ENCODE measurements at regions of chr22 and their contacts with region 1.

Region 1: GRCh38 chr22:19970479-19971275 is 29.1 kb upstream of the TXNRD2 start:
- DNase-seq: peak; percentile 92

Region 2: DNA sequence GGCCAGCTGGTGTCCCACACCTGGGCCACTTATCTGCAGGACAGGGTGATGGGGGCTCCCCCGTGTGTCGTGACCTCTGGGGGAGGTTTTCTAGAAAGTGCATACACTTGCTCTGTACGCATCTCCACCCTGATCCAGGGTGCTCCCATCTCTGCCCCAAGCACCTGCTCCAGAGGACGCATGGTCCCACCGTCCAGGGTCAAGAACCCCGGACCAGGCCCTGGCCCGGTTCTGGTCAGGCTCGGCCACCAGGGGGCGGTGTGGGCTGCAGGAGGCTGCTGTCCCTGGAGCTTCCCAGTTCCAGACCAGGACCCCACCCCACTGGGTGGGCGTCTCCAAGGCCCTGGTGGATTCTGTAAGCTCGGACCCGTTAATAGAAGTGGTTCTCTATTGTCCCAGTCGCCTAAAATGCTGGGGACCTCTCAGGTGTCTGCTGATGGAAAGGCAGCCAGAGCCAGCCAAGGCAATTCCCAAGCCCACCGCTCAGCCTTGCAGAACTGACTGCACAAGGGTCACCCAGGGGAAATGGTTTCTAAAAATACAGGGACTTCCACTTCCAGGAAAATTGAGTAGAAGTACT is 291.1 kb before region 1 on chr22:
- intact Hi-C with region 1: no loop called
- DNase-seq: no peak

Region 3: GRCh38 chr22:19928207-19928606 is 42.5 kb before region 1 on chr22:
- intact Hi-C with region 1: no loop called
- DNase-seq: no peak

Region 4: DNA sequence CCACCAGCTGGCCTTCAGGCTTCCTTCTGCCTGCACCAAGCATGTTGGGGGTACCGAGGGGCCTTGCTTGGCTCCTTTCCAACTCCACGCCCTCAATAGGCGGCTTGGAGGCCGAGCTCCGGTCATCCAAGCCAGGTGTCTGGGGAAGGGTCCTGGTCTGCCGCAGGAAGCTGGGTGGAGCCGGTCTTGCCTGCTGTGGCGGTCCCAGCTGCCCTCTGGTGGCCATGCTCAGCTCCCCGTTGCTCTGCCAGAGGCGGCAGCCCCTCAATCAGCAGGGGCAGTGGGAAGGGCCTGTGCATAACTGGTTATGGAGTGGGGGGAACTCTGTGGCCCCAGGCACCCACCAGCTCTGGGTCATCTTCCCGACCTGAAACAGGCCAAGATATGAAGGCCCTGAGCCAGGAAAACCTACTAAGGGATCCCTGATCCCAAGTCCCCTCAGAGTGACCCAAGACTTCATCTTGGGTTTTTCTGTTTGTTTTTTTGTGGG is 42.8 kb after region 1 on chr22:
- intact Hi-C with region 1: loop called (anchors 2 kb)
- DNase-seq: peak; percentile 88

Region 5: DNA sequence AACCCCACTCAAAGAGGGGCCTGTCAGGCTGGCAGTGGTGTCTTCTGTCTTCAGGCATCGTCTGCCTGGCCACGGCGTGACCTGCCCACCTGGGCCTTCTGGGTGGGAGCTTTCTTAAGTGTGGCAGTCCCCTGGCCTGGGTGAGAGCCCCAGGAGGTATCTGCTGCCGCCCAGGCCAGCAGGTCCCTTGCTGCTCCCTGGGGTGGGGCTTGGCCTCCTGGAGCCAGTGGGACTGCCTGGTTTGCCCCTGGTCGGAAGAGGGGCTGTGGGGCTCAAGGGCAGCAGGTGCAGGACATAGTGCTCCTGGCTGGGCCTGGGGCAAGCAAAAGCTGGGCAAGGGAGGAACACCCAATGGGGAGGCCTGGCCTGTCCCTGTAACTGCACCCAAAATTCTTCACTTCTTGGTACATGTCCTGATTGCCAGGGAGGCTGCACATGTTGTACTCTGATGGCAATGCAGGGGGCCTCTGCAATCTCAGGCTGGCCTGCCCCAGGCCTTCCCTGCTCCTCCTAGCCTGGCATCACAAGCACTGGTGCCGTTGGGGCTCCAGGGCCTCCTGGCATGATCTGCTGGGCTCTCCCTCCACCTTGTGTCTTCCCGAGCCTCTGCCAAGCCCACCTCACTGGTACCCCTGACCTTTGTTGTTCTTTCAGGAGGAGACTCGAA is 138.8 kb after region 1 on chr22:
- intact Hi-C with region 1: loop called in 1 of 2 experiments (anchors 1 kb)
- DNase-seq: no peak